ENCODE measurements at regions of chr1 and their contacts with region 1.

Region 1: DNA sequence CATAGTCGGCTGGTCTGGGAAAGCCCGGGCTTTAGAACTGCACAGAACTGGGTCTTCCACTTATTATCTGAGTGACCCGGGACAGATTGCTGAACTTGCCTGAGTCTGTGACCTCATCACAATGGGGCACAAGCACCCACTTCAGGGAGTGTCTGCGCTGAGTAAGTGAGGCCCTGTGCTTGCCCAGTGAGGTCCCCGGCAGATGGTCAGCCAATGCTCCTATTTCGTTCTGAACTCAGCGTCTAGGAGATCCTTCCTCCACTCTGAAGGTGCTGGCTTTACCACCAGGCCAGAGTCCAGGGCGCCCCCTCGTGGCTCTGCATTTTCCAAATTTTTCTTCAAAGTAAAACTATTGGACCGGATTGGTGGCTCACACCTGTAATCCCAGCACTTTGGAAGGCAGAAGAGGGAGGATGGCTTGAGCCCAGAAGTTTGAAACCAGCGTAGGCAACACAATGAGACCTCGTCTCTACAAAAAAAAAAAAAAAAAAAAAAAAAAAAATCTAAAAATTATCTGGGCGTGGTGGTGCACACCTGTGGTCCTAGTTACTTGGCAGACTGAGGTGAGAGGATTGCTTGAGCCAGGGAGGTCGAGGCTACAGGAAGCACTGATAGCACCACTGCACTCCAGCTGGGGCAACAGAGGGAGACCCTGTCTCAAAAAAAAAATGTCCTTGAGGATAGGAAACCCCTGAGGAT is 61.7 kb downstream of the FCRL5 start:
- DNase-seq: peak; percentile 79
- H3K4me3 ChIP-seq: no peak overlapping the region
- H3K27ac ChIP-seq: no peak overlapping the region
- H3K4me1 ChIP-seq: peaks cover 0 to 6% (median 0%) of the 10 kb centered on the region in 6 donors
- H3K27me3 ChIP-seq: peaks cover 0 to 14% (median 0%) of the 10 kb centered on the region in 7 donors
- CTCF ChIP-seq: peak in 9 of 11 experiments; percentile 16 to 62 (median 47)
- POLR2A ChIP-seq: no peak

Region 2: DNA sequence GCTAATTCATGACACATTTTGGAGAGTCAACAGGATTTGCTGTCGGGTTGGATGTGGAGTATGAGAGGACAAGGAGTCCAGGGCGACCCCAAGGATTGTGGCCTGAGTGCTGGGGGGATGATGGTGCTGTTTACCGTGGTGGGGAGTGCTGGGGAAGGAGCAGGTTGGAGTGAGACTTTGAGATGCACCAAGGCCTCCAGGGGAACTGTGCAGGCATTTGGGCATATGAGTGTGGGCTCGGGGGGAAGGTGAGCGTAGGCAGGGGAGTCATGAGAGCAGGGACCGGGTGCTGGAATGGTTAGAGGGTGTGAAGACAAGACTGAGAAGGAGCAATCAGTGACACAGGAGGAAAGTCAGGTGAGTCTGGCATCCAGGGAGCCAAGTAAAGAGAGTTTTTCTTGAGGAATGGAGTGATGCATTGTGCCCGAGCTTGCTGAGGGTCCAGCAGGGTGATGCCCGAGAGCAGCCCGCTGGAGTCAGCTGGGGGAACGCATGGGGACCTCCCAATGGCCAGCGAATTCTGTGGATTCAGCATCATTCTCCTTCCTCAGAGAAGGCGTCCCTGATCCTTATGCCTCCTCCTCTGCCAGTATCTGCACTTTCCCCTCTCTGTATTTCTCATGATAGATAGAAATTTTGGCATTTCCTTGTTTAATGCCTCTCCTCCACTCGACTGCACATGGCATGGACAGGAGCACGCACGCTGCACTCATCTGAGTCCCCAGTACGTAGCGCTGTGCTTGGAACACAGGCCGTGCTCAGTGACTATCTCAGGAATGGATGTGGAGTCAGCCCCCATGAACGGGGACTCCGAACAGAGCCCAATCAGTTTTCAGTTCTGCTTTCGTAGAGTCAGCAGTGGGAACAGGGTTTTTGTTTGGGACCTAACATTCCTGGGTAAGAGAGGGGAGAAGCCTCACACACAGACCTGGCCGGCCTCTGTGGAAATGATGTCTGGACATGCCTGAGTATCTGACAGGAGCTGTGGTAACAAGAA is 300.3 kb before region 1 on chr1:
- intact Hi-C with region 1: no loop called
- DNase-seq: no peak
- H3K4me3 ChIP-seq: no peak overlapping the region
- H3K27ac ChIP-seq: no peak overlapping the region
- H3K4me1 ChIP-seq: peaks cover 0 to 13% (median 5%) of the 10 kb centered on the region in 6 donors
- H3K27me3 ChIP-seq: peaks cover 6 to 62% (median 17%) of the 10 kb centered on the region in 7 donors
- CTCF ChIP-seq: no peak
- POLR2A ChIP-seq: no peak

Region 3: GRCh38 chr1:157369808-157370521 is 120.7 kb before region 1 on chr1:
- intact Hi-C with region 1: loop called (anchors 2 kb)
- DNase-seq: no peak
- H3K4me3 ChIP-seq: no peak overlapping the region
- H3K27ac ChIP-seq: no peak overlapping the region
- H3K4me1 ChIP-seq: no peaks in the 10 kb centered on the region
- H3K27me3 ChIP-seq: peaks cover 0 to 6% (median 0%) of the 10 kb centered on the region in 7 donors
- CTCF ChIP-seq: peak; percentile 75 to 90 (median 84)
- POLR2A ChIP-seq: no peak